ENCODE measurements at regions of chr6 and their contacts with region 1.

Region 1: DNA sequence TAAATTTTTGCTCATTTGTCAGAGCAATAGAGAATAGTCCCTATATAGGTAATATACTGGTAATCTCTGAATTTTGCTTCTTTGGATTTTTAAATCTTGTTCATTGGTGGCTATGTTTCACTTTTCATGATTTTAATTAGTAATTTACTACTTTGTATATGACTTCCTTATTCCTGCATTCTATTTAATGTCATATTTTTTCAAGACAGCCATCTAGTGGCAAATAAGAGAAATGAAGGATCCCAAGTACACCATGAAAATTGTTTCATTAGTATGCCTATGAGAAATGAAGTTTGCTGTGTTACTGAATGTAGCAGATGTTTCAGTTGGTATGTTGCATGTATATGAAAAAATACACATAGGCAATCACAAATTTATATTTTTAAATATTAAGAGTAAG is 82.4 kb downstream of the ZNF292 start:
- DNase-seq: peak in 3 of 14 experiments; percentile 40 to 46 (median 43)
- ATAC-seq: peak; percentile 57
- H3K4me3 ChIP-seq: no peak overlapping the region
- H3K4me3 Mint-ChIP-seq: no peak overlapping the region
- H3K27ac ChIP-seq: no peak overlapping the region
- H3K27ac Mint-ChIP-seq: peak overlapping the region; percentile 19
- H3K4me1 ChIP-seq: no peaks in the 10 kb centered on the region
- H3K4me1 Mint-ChIP-seq: peaks cover 8% of the 10 kb centered on the region
- H3K27me3 ChIP-seq: no peaks in the 10 kb centered on the region
- H3K27me3 Mint-ChIP-seq: no peaks in the 10 kb centered on the region
- CTCF ChIP-seq: peak; percentile 75

Region 2: GRCh38 chr6:87139236-87139635 is 98.6 kb before region 1 on chr6:
- CTCF ChIA-PET with region 1: interaction called, 7 read pairs
- POLR2A ChIA-PET with region 1: no interaction called
- intact Hi-C with region 1: loop called (anchors 1 kb)
- DNase-seq: peak in 8 of 14 experiments; percentile 16 to 82 (median 54)
- ATAC-seq: peak; percentile 85
- H3K4me3 ChIP-seq: no peak overlapping the region
- H3K4me3 Mint-ChIP-seq: no peak overlapping the region
- H3K27ac ChIP-seq: no peak overlapping the region
- H3K27ac Mint-ChIP-seq: no peak overlapping the region
- H3K4me1 ChIP-seq: no peaks in the 10 kb centered on the region
- H3K4me1 Mint-ChIP-seq: peaks cover 5% of the 10 kb centered on the region
- H3K27me3 ChIP-seq: no peaks in the 10 kb centered on the region
- H3K27me3 Mint-ChIP-seq: peaks cover 13% of the 10 kb centered on the region
- CTCF ChIP-seq: peak; percentile 83

Region 3: GRCh38 chr6:87914637-87915395 is 677.0 kb after region 1 on chr6:
- CTCF ChIA-PET with region 1: no interaction called
- POLR2A ChIA-PET with region 1: no interaction called
- intact Hi-C with region 1: no loop called
- DNase-seq: peak in 1 of 14 experiments; percentile 17
- ATAC-seq: peak; percentile 81
- H3K4me3 ChIP-seq: no peak overlapping the region
- H3K4me3 Mint-ChIP-seq: no peak overlapping the region
- H3K27ac ChIP-seq: no peak overlapping the region
- H3K27ac Mint-ChIP-seq: no peak overlapping the region
- H3K4me1 ChIP-seq: no peaks in the 10 kb centered on the region
- H3K4me1 Mint-ChIP-seq: peaks cover 14% of the 10 kb centered on the region
- H3K27me3 ChIP-seq: no peaks in the 10 kb centered on the region
- H3K27me3 Mint-ChIP-seq: peaks cover 4% of the 10 kb centered on the region
- CTCF ChIP-seq: no peak